ENCODE measurements at regions of chr11 and their contacts with region 1.

Region 1: DNA sequence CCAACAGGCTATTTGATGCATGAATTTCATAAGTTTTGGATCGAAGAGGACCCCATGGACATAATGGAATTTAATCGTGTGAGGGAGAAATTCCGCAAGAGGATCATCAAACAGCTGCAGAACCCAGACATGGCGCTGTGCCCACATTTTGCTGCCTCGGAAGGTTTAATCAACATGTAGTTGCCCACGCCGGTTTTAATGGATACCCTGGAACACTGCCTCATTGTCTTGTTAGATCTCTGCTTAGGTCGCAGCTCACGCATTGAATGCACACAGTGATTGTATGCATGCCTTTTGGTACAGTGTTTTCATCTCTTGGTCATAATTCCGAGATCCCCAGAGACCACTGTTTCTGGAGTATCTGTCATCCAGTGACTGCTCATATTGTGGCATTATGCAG is 46.8 kb downstream of the SLN start:
- DNase-seq: no peak
- ATAC-seq: no peak
- H3K4me3 ChIP-seq: no peak overlapping the region
- H3K27ac ChIP-seq: no peak overlapping the region
- H3K4me1 ChIP-seq: peaks cover 5% of the 10 kb centered on the region
- H3K27me3 ChIP-seq: peaks cover 0 to 5% (median 0%) of the 10 kb centered on the region in 3 donors
- CTCF ChIP-seq: no peak

Region 2: GRCh38 chr11:107609400-107610218 is 55.4 kb before region 1 on chr11:
- intact Hi-C with region 1: loop called in 1 of 2 experiments (anchors 5 kb)
- DNase-seq: no peak
- ATAC-seq: no peak
- H3K4me3 ChIP-seq: no peak overlapping the region
- H3K27ac ChIP-seq: no peak overlapping the region
- H3K4me1 ChIP-seq: no peaks in the 10 kb centered on the region
- H3K27me3 ChIP-seq: peaks cover 0 to 4% (median 0%) of the 10 kb centered on the region in 3 donors
- CTCF ChIP-seq: no peak

Region 3: DNA sequence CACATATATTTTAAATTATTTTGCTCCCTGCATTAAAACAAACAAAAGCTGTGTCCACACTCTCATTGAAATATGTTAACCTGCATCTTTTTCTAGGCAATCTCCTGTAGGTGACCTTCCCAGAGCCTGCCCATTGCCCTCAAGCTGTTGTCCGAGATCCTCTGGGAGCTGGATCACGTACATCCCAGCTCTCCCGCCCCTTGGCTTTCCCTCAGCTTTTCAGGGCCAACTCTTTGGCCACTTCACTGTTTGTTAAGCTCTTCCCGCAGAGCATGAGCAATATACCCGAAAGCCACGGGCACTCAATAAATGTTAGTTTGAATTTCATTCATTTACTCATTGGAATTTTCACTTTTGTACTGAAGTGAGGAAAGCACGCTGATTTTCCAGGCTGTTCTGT is 41.8 kb before region 1 on chr11:
- intact Hi-C with region 1: no loop called
- DNase-seq: peak; percentile 18 to 49
- ATAC-seq: no peak
- H3K4me3 ChIP-seq: no peak overlapping the region
- H3K27ac ChIP-seq: no peak overlapping the region
- H3K4me1 ChIP-seq: no peaks in the 10 kb centered on the region
- H3K27me3 ChIP-seq: peaks cover 0 to 2% (median 0%) of the 10 kb centered on the region in 3 donors
- CTCF ChIP-seq: no peak